CD4-positive, alpha-beta T cell (primary cell): ENCODE measurements at regions of chr4 and their contacts with region 1.

Region 1: GRCh38 chr4:42385516-42385915 is 11.8 kb upstream of the SHISA3 start:
- DNase-seq: no peak
- ATAC-seq: no peak
- H3K4me3 ChIP-seq: no peak overlapping the region
- H3K4me3 Mint-ChIP-seq: no peak overlapping the region
- H3K27ac ChIP-seq: no peak overlapping the region
- H3K27ac Mint-ChIP-seq: no peak overlapping the region
- H3K4me1 ChIP-seq: no peaks in the 10 kb centered on the region
- H3K4me1 Mint-ChIP-seq: no peaks in the 10 kb centered on the region
- H3K27me3 ChIP-seq: peaks cover 0 to 8% of the 10 kb centered on the region in 2 experiments
- H3K27me3 Mint-ChIP-seq: peaks cover 15% of the 10 kb centered on the region
- CTCF ChIP-seq: no peak

Region 2: GRCh38 chr4:42339935-42340406 is 45.5 kb before region 1 on chr4:
- CTCF ChIA-PET with region 1: no interaction called
- POLR2A ChIA-PET with region 1: no interaction called
- intact Hi-C with region 1: loop called in 1 of 2 experiments (anchors 5 kb)
- DNase-seq: no peak
- ATAC-seq: no peak
- H3K4me3 ChIP-seq: no peak overlapping the region
- H3K4me3 Mint-ChIP-seq: no peak overlapping the region
- H3K27ac ChIP-seq: no peak overlapping the region
- H3K27ac Mint-ChIP-seq: no peak overlapping the region
- H3K4me1 ChIP-seq: no peaks in the 10 kb centered on the region
- H3K4me1 Mint-ChIP-seq: no peaks in the 10 kb centered on the region
- H3K27me3 ChIP-seq: peaks cover 0 to 2% of the 10 kb centered on the region in 2 experiments
- H3K27me3 Mint-ChIP-seq: peaks cover 10% of the 10 kb centered on the region
- CTCF ChIP-seq: no peak